Activated CD4-positive, alpha-beta memory T cell treated with anti-CD3 and anti-CD28 coated beads for 36 hours (primary cell): ENCODE measurements at regions of chr1 and their contacts with region 1.

Region 1: DNA sequence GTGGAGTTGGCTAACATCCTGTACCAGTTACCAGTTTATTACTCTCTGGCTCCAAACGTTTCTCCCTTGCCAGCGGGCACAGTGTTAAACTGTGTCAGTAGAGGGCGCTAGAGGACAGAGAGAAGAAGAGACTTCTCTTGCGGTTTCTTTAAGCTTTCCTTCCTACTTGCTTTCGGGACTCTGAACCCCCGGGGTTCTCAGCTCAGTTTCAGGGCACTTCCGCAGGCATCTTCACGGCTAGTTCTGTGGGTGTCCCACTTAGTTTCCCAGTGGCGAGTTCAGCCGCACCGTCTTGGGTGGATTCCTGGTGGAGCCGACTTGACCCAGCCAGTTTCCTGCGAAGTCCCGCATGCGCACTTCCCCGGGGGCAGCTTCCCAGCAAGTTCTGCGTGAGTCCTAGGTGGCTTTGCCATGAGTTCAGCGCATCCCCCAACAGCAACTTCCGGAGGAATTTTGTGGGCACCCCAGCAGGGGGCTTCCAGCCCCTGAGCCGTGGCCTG is 37.9 kb upstream of the BTG2 start:
- DNase-seq: peak; percentile 88
- H3K4me3 Mint-ChIP-seq: peak overlapping the region; percentile 82
- H3K27ac Mint-ChIP-seq: peak overlapping the region; percentile 89
- H3K4me1 Mint-ChIP-seq: peaks cover 22% of the 10 kb centered on the region
- H3K27me3 Mint-ChIP-seq: no peaks in the 10 kb centered on the region

Region 2: DNA sequence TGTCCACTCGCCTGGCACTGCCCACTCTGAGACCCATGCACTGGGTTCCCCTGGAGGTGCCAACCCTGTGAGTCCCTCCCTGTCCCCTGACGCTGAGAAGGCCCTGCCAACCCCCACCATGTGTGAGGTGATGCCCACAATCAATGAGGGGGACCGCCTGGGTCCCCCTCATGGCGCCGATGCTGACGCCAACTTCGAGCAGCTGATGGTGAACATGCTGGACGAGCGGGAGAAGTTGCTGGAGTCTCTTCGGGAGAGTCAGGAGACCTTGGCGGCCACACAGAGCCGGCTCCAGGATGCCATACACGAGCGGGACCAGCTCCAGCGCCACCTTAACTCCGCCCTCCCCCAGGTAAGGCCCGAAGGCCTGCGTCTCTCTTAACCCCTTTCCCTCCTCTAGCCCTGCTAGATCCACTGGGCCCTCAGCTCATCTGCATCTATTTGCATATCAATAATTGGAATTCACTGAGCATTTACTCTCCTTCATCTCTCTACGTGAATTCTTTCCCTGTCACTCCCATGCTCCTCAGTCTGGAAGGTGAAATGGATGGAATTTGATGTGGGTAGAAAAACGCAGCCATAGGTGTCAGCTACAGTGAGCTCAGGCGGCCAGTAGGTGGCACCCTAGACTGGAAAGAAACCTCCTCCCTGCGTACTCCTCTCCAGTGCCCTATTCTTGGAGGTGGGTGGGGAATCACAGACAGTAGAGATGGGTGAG is 228.3 kb before region 1 on chr1:
- CTCF ChIA-PET with region 1: interaction called, 74 read pairs
- POLR2A ChIA-PET with region 1: no interaction called
- intact Hi-C with region 1: loop called (anchors 1 kb)
- DNase-seq: peak; percentile 73
- H3K4me3 Mint-ChIP-seq: no peak overlapping the region
- H3K27ac Mint-ChIP-seq: no peak overlapping the region
- H3K4me1 Mint-ChIP-seq: no peaks in the 10 kb centered on the region
- H3K27me3 Mint-ChIP-seq: peaks cover 6% of the 10 kb centered on the region

Region 3: DNA sequence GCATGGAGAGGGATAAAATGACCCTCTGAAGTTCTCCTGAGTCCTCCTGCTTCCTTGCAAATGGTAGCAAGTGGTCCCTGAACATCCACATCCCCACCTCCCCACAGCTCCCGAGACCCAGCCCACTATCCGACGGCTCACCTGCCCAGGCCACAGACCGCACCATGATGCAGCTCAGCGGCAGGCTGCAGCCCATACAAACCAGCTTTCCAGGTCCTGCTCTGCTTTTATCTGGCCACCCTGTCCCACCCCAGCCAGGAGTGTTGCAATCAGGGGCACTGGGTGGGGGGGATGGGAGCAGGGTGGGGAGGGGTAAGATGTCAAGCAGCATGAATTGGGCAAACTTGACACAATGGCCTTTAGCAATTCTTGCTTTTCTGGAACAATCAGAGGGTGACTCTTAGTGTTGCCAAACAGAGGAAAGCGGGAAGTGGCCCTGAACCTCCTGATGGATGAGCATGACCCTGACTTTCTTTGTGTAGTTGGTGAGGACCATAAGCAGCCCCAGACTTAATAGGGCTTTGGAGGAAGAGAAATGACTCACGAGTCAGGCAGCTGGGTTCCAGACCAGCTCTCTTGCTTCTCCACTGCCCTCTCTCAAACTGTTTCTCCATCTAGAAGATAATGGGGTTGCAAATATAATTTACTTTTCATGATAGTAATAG is 37.8 kb before region 1 on chr1 and contains the start of gene CHIT1:
- CTCF ChIA-PET with region 1: no interaction called
- POLR2A ChIA-PET with region 1: no interaction called
- intact Hi-C with region 1: no loop called
- DNase-seq: no peak
- H3K4me3 Mint-ChIP-seq: no peak within 1 kb of the TSS
- H3K27ac Mint-ChIP-seq: no peak within 1 kb of the TSS
- H3K4me1 Mint-ChIP-seq: no peaks in the 10 kb centered on the region
- H3K27me3 Mint-ChIP-seq: peaks cover 12% of the 10 kb centered on the region
- total RNA-seq, gene CHIT1: 0.19 to 0.53 TPM

Region 4: GRCh38 chr1:203299169-203299568 is 31.8 kb after region 1 on chr1:
- CTCF ChIA-PET with region 1: interaction called, 356 read pairs
- POLR2A ChIA-PET with region 1: no interaction called
- intact Hi-C with region 1: no loop called
- DNase-seq: no peak
- H3K4me3 Mint-ChIP-seq: no peak overlapping the region
- H3K27ac Mint-ChIP-seq: no peak overlapping the region
- H3K4me1 Mint-ChIP-seq: peaks cover 44% of the 10 kb centered on the region
- H3K27me3 Mint-ChIP-seq: no peaks in the 10 kb centered on the region

Region 5: GRCh38 chr1:203340112-203340804 is 72.9 kb after region 1 on chr1:
- CTCF ChIA-PET with region 1: interaction called, 847 read pairs
- POLR2A ChIA-PET with region 1: interaction called, 17 read pairs
- intact Hi-C with region 1: no loop called
- DNase-seq: peak; percentile 71
- H3K4me3 Mint-ChIP-seq: no peak overlapping the region
- H3K27ac Mint-ChIP-seq: no peak overlapping the region
- H3K4me1 Mint-ChIP-seq: peaks cover 23% of the 10 kb centered on the region
- H3K27me3 Mint-ChIP-seq: peaks cover 11% of the 10 kb centered on the region

Region 6: DNA sequence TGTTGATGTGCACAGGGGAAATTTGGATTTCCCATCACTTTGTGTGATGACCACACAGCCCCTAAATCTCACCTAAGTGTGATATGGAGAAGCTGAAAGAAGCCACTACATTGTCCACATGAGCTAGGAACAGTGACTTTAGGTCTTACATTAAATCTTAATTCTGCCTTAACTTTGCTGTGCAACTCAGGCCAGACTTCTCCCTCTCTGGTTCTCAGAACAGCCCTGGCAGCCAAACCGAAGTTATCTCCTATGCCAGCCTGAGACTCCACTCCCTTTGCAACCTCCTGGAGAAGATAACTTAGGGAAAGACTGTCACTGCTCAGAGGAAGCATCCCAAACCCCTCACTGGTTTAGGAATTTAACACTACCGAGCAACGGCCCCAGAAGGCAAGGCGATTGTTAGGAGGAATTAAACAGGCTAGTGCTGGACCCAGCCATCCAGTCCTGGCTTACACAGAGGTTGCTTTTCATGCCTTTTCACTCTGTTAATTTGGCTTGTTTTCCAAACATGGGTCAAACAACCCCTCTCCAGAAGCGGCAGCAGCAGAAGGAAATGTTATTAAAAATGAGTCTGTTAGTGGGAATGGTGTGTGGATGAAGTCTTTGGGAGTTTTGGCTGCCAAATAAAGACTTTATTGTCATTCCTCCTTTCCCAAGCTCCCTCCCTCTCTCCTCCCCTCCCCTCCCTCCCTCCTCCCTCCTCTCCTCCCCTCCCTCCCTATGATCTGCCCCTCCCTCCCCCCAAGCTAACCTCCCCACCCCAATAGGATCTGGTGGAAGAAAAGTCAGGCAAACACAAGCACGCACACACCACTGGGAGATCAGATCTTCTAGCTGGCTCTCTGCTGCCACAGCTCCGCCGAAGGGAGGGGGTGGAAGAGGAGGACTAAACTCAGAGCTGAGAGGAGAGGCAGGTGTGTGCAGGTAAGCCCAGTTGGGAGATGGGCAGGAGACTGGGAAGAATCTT is 207.9 kb after region 1 on chr1 and contains the start of gene PRELP:
- CTCF ChIA-PET with region 1: interaction called, 14 read pairs
- POLR2A ChIA-PET with region 1: no interaction called
- intact Hi-C with region 1: no loop called
- DNase-seq: no peak
- H3K4me3 Mint-ChIP-seq: no peak within 1 kb of the TSS
- H3K27ac Mint-ChIP-seq: no peak within 1 kb of the TSS
- H3K4me1 Mint-ChIP-seq: no peaks in the 10 kb centered on the region
- H3K27me3 Mint-ChIP-seq: peaks cover 23% of the 10 kb centered on the region
- total RNA-seq, gene PRELP: not detected

Region 7: GRCh38 chr1:203486618-203487370 is 219.4 kb after region 1 on chr1:
- CTCF ChIA-PET with region 1: interaction called, 212 read pairs
- POLR2A ChIA-PET with region 1: interaction called, 6 read pairs
- intact Hi-C with region 1: loop called (anchors 1 kb)
- DNase-seq: no peak
- H3K4me3 Mint-ChIP-seq: peak overlapping the region; percentile 67
- H3K27ac Mint-ChIP-seq: no peak overlapping the region
- H3K4me1 Mint-ChIP-seq: peaks cover 9% of the 10 kb centered on the region
- H3K27me3 Mint-ChIP-seq: no peaks in the 10 kb centered on the region

Region 8: GRCh38 chr1:203504397-203505250 is 237.2 kb after region 1 on chr1:
- CTCF ChIA-PET with region 1: interaction called, 15 read pairs
- POLR2A ChIA-PET with region 1: no interaction called
- intact Hi-C with region 1: no loop called
- DNase-seq: peak; percentile 84
- H3K4me3 Mint-ChIP-seq: no peak overlapping the region
- H3K27ac Mint-ChIP-seq: no peak overlapping the region
- H3K4me1 Mint-ChIP-seq: no peaks in the 10 kb centered on the region
- H3K27me3 Mint-ChIP-seq: peaks cover 2% of the 10 kb centered on the region

Region 9: GRCh38 chr1:203572134-203572625 is 304.8 kb after region 1 on chr1:
- CTCF ChIA-PET with region 1: no interaction called
- POLR2A ChIA-PET with region 1: no interaction called
- intact Hi-C with region 1: no loop called
- DNase-seq: no peak
- H3K4me3 Mint-ChIP-seq: no peak overlapping the region
- H3K27ac Mint-ChIP-seq: no peak overlapping the region
- H3K4me1 Mint-ChIP-seq: no peaks in the 10 kb centered on the region
- H3K27me3 Mint-ChIP-seq: peaks cover 3% of the 10 kb centered on the region